GM10248 (cell line): ENCODE measurements at regions of chr14 and their contacts with region 1.

Region 1: DNA sequence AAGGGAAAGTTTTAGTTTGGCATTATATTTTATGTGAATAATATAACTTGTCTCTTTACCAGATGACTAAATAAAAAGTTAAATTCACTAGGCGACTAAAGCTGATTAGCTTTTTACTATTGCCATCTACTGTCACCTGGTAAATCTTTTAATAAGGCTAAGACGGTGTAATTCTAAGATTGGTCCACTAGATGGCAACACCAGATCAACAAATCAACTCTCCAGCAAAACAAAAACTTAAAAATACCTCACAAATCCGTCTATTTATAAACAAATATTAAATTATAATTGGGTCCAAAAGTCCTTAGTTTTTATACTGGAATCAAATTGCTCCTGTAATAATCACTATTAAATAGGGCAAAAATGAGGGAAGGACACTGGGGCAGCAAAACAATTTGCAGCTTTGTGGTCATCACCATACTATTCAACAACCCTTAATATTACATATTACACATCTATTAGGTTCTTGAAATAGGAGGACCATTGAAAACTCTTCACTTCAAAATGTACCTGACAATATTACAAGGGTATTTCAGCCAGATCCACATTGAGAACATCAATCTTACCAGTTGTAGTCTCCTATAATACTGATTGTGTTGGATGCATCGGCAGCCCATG is 47.9 kb downstream of the GALC start:
- DNase-seq: peak; percentile 5
- CTCF ChIP-seq: peak; percentile 44

Region 2: GRCh38 chr14:87934185-87934584 is 10.9 kb before region 1 on chr14:
- CTCF ChIA-PET with region 1: interaction called, 46 read pairs
- POLR2A ChIA-PET with region 1: no interaction called
- DNase-seq: no peak
- CTCF ChIP-seq: no peak

Region 3: DNA sequence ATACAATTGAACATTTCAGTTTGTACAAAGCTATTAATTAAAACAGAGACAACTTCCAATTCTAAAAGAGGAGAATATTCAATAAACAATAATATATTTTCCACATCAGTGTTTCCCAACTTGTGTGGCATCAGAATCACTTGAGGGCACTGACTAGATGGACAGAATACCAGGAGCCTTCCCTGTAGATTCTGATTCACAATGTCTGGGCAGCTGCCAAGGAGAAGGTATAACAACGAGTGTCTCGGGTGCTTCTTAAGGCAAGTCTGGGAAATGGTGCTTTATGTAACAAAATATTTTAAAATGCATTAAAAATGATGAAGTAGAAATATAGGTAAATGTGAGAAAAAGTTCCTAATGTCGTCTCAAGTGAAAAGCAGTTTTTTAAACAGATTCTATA is 21.7 kb after region 1 on chr14:
- CTCF ChIA-PET with region 1: interaction called, 18 read pairs
- POLR2A ChIA-PET with region 1: no interaction called
- DNase-seq: no peak
- CTCF ChIP-seq: no peak

Region 4: DNA sequence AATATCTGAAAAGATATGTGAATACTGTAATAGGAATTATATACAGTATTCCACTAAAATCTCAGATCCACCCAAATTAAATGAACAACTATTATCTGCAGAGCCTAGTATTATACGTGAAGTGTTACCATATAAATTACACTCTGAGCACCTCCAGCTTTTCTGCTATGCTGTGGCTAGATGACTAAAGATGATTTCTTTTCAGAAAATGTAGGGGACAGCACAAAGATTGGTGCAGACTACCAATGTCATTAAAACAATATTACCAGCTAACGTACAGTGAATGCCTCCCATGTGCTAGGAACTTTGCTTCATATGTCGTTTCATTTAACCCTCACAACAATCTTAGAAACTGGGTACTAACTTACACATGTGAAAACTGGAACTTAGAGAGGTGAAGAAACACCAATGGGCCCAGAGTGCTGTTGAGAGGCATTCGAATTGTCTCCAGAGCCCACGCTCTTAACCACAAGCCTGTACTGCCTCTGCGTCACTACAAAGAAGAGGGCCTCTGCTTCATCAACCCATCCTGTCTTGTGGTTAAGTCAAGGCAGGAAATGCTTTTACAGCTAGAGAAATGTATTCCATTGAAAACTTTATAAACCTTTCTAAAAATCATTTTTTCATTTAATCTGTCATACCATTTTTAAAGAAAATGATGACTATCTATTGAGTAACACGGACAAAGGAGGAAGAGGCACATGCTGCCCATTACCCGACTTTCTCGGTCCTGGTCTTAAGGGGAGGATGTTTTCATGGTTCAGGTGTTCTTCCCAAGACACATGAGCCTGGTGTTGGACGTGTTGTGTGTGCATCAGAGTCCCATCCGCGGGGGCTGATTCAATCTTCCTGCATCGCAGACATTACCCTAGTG is 61.1 kb after region 1 on chr14:
- CTCF ChIA-PET with region 1: interaction called, 11 read pairs
- POLR2A ChIA-PET with region 1: no interaction called
- DNase-seq: peak; percentile 37
- CTCF ChIP-seq: no peak

Region 5: DNA sequence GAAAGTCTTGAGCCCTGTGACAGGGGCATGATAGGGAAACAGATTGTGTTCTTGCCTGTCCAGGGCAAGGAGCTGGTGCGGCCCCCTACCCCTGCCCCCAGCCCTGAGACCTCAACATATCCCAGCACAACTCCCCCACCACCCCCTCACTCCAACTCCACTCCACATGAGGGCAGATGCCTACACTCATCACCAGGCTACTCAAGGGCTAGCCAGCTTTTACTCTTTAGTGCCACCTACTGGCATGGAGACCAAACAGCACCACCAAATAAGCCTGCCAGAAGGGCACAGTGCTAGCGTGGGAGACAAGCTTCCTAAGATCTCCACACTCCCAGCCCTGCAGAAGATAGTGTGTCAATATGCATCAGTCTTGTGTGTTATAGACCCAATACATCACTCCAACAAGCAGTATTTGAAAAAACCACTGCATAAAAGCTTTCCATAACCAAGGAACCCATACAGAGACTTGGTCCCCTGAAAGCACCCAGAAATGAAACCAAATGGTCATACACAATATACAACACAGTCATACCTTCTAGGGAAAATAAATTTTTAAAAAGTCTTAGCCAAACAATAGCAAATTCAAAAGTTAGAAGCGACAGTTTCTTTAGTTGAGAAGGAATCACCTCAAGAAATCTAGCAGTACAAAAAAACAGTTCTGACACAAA is 223.5 kb after region 1 on chr14:
- CTCF ChIA-PET with region 1: interaction called, 43 read pairs
- POLR2A ChIA-PET with region 1: no interaction called
- DNase-seq: peak; percentile 63
- CTCF ChIP-seq: peak; percentile 77

Region 6: DNA sequence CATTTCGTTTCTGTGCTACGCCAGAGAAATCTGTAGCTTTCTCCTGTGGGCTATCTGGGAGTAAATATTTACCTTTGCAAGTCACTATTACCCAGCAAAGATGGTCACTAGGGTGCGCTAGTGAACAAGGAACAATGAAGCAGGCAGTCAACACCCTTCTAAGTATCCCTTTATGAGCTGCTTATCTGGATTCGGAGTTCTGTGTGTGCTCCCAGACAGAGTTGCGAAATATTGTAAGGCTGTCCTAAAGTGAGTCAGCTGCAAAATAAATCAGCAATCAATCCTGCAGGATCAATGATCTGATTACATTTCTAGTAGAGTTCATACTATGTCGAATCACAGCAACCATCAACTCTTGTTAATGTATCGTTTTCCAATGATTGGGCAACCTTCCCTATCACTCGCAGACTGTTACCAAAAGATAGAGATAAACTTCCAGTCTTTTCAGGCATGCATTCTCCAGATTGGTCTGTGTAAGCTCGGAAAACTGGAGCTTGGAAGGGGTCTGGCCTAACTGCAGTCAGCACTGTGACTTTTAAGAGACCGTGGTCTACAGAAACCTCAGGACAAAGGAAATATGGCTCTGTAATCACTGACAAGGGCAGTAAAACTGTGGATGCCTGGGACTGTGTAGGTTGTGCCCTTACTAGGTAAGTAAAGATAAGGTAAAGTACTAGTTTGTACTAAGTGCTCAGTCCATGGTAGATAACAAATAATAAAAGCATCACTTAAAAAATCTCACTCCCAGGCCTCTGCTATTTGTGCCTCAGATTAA is 244.5 kb after region 1 on chr14:
- CTCF ChIA-PET with region 1: interaction called, 23 read pairs
- POLR2A ChIA-PET with region 1: no interaction called
- DNase-seq: peak; percentile 58
- CTCF ChIP-seq: peak; percentile 70